Right ventricle myocardium inferior (tissue), 1 donor: ENCODE measurements at regions of chr2 and their contacts with region 1.

Region 1: GRCh38 chr2:237572021-237572741 is 5.8 kb downstream of the PRLH start:
- DNase-seq: peak; percentile 94
- ATAC-seq: peak; percentile 93

Region 2: DNA sequence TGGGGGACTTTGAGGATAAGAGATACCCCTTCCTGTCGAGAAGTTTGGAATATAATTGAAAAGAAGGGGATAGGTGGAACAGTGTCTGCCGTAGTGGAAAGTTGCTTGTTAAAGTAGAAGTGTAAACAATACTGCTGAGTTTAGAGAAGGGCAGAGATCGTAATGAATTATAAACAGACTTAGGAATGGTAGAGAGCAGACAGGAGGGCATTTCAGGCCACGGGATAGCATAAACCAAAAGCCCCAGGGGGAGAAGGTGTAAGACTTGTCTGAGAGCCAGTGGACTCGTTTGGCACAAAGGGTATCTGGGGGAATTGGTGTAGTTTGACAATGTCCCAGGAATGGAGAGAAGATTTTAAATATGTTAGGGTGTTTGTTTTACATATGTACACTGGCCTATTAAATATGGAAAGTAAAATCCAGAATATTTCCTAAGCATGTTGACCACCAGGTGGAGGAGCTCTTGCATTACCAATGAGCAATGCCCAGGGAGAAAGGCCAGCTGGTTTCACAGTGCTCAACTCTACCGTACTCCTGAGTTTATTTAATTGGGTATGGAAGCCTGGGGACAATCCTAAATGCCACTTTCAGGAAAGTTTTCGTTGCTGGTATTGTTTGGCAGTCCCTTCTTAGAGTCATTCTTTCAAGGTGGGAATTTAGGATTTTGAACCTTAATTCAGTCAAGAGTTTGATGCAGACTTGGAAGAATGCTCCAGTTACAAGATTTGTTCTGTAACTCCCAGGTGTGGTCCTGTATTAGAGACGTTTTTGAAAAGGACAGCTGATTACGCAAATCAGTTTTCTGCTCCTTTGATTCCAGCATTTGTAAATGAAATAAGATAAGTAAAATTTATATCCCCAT is 479.0 kb before region 1 on chr2:
- intact Hi-C with region 1: loop called (anchors 10 kb)
- DNase-seq: no peak
- ATAC-seq: peak; percentile 87

Region 3: GRCh38 chr2:237122214-237122666 is 449.9 kb before region 1 on chr2:
- intact Hi-C with region 1: loop called (anchors 2 kb)
- DNase-seq: peak; percentile 73
- ATAC-seq: peak; percentile 83

Region 4: GRCh38 chr2:237421542-237422116 is 150.6 kb before region 1 on chr2:
- intact Hi-C with region 1: loop called (anchors 5 kb)
- DNase-seq: peak; percentile 80
- ATAC-seq: peak; percentile 84

Region 5: DNA sequence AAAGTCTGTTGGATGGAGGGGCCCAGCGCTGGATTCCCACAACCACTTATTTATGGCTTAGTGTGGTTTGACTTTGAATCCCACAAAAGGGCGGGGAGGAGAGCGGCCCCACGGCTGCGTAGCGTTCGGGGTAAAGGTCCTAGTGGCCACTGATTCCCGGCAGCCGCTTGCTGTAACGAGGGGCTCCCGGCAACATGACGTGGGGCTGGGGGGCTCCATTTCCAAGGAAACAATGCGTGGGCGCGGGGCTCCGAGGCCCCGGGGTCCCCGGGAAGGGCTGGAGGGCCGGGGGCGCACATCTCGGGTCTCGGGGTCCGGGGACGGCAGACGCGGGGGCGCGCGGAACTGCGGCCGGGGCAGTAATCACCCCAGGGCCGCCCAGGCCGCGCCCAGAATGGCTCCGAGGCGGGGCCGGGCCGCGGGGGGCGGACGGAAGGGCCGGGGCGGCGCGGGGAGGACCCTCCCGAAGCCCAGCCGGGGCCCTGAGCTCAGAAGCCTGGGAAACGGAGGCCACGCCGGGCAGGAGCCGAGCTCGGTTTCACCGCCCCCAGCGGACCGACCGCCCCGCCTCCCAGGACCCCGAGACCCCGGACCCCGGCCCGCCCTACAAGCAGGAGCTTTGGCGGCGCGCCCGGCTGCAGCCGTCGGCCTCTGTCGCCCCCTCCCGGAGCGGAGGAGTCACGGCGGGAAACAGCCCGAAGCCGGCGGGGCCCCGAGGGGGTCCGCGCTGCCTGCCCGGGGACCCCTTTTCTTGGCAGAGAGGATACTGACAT is 97.1 kb before region 1 on chr2:
- intact Hi-C with region 1: loop called (anchors 5 kb)
- DNase-seq: peak; percentile 91
- ATAC-seq: peak; percentile 93

Region 6: GRCh38 chr2:237512774-237513466 is 59.3 kb before region 1 on chr2:
- intact Hi-C with region 1: loop called (anchors 1 kb)
- DNase-seq: peak; percentile 91
- ATAC-seq: peak; percentile 70